Activated CD4-positive, alpha-beta memory T cell treated with anti-CD3 and anti-CD28 coated beads, Interleukin-2, amount 10 ng/mL, durations not matched to agents 7 days and 5 days (primary cell): ENCODE measurements at regions of chr15 and their contacts with region 1.

Region 1: GRCh38 chr15:64162870-64163658 is at the start of gene PPIB:
- DNase-seq: peak; percentile 98
- H3K4me3 Mint-ChIP-seq: peak within 1 kb of the TSS; percentile 83
- H3K27ac Mint-ChIP-seq: peak within 1 kb of the TSS; percentile 96
- H3K4me1 Mint-ChIP-seq: peaks cover 58% of the 10 kb centered on the region
- H3K27me3 Mint-ChIP-seq: no peaks in the 10 kb centered on the region
- total RNA-seq, gene PPIB: 392 to 410 TPM

Region 2: GRCh38 chr15:64146885-64147681 is 16.0 kb before region 1 on chr15:
- CTCF ChIA-PET with region 1: interaction called, 3 read pairs
- POLR2A ChIA-PET with region 1: interaction called, 72 read pairs
- DNase-seq: no peak
- H3K4me3 Mint-ChIP-seq: no peak overlapping the region
- H3K27ac Mint-ChIP-seq: no peak overlapping the region
- H3K4me1 Mint-ChIP-seq: peaks cover 19% of the 10 kb centered on the region
- H3K27me3 Mint-ChIP-seq: no peaks in the 10 kb centered on the region

Region 3: GRCh38 chr15:64180235-64180837 is 17.3 kb after region 1 on chr15:
- CTCF ChIA-PET with region 1: interaction called, 4 read pairs
- POLR2A ChIA-PET with region 1: interaction called, 17 read pairs
- DNase-seq: no peak
- H3K4me3 Mint-ChIP-seq: no peak overlapping the region
- H3K27ac Mint-ChIP-seq: no peak overlapping the region
- H3K4me1 Mint-ChIP-seq: peaks cover 7% of the 10 kb centered on the region
- H3K27me3 Mint-ChIP-seq: no peaks in the 10 kb centered on the region

Region 4: GRCh38 chr15:64187396-64188191 is 24.5 kb after region 1 on chr15:
- CTCF ChIA-PET with region 1: interaction called, 4 read pairs
- POLR2A ChIA-PET with region 1: interaction called, 37 read pairs
- DNase-seq: no peak
- H3K4me3 Mint-ChIP-seq: peak overlapping the region; percentile 72
- H3K27ac Mint-ChIP-seq: peak overlapping the region; percentile 87
- H3K4me1 Mint-ChIP-seq: peaks cover 25% of the 10 kb centered on the region
- H3K27me3 Mint-ChIP-seq: no peaks in the 10 kb centered on the region

Region 5: GRCh38 chr15:64284042-64284441 is 121.0 kb after region 1 on chr15:
- CTCF ChIA-PET with region 1: no interaction called
- POLR2A ChIA-PET with region 1: no interaction called
- DNase-seq: no peak
- H3K4me3 Mint-ChIP-seq: no peak overlapping the region
- H3K27ac Mint-ChIP-seq: no peak overlapping the region
- H3K4me1 Mint-ChIP-seq: peaks cover 2% of the 10 kb centered on the region
- H3K27me3 Mint-ChIP-seq: no peaks in the 10 kb centered on the region